ENCODE measurements at regions of chr19 and their contacts with region 1.

Region 1: DNA sequence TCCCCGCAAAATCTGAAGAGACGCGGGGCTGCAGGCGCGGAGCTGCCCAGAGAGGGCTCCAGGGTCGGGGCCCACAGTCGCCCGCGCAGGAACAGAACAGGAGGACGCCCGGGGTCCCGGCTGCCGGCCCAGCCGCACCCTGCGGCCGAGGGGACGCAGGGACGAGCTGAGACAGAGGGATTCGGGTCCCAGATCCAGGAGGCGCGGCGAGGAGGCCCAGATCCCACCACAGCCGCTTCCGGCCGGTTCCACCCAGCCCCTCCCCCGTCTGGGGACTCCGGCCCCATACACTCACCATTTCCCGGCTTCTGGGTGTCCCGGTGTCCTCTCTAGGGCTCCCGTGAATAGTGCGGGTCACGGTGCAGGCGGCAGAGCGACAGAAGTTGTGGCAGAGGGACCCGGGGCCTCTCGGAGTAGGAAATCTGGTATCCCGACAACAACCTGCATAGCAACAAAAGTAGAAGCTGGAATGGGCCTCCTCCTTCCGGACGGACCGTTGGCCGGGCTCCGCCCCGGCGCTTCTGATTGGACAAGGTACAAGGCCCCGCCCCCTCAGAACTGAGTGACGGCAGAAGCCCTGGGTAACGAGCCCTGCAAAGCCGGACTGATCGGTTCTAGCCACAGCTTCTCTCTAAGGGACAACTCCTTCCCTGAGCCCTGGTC is at the start of gene ZNF20:
- DNase-seq: peak; percentile 96 to 98 (median 97)
- ATAC-seq: peak; percentile 99 to 100 (median 100)
- H3K4me3 ChIP-seq: peak within 1 kb of the TSS; percentile 60 to 98 (median 86)
- H3K27ac ChIP-seq: peak within 1 kb of the TSS; percentile 12 to 91 (median 81)
- H3K4me1 ChIP-seq: peaks cover 3 to 25% (median 19%) of the 10 kb centered on the region in 12 donors
- H3K27me3 ChIP-seq: no peaks in the 10 kb centered on the region
- CTCF ChIP-seq: peak in 1 of 12 donors; percentile 17
- POLR2A ChIP-seq: peak in 1 of 2 donors; percentile 43
- total RNA-seq, gene ZNF20: 0.63 to 2.7 (median 1.4) TPM in 6 of 9 donors, not detected in the others

Region 2: GRCh38 chr19:11881151-11881800 is 258.7 kb before region 1 on chr19:
- intact Hi-C with region 1: loop called (anchors 1 to 10 kb)
- DNase-seq: peak in 4 of 5 donors; percentile 37 to 48 (median 43)
- ATAC-seq: peak in 3 of 4 donors; percentile 76 to 83 (median 79)
- H3K4me3 ChIP-seq: peak overlapping the region in 2 of 12 donors; percentile 8 to 17
- H3K27ac ChIP-seq: no peak overlapping the region
- H3K4me1 ChIP-seq: peaks cover 0 to 4% (median 0%) of the 10 kb centered on the region in 12 donors
- H3K27me3 ChIP-seq: no peaks in the 10 kb centered on the region
- CTCF ChIP-seq: peak; percentile 51 to 81 (median 72)
- POLR2A ChIP-seq: no peak

Region 3: DNA sequence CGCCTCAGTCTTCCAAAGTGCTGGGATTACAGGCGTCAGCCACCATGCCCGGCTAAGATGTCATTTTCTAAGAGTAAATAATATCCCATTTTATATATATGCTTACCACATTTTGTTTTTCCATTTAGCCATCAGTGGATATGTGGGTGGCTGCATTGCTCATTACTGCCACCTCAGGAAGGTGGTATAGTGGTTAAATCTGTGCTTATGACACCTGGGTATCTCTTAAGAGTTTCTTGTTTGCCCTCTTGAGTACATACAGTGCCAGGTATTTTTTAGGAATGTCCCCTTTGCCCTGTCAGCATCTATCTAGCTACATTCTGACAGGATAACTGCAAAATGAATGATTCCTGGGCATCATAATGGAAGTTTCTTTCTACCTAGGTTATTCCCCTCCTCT is 237.8 kb before region 1 on chr19:
- intact Hi-C with region 1: no loop called
- DNase-seq: no peak
- ATAC-seq: no peak
- H3K4me3 ChIP-seq: no peak overlapping the region
- H3K27ac ChIP-seq: no peak overlapping the region
- H3K4me1 ChIP-seq: no peaks in the 10 kb centered on the region
- H3K27me3 ChIP-seq: no peaks in the 10 kb centered on the region
- CTCF ChIP-seq: no peak
- POLR2A ChIP-seq: no peak

Region 4: GRCh38 chr19:11924886-11925650 is 214.9 kb before region 1 on chr19 and contains the start of gene ZNF700:
- intact Hi-C with region 1: loop called in 4 of 10 experiments (anchors 1 to 10 kb)
- DNase-seq: peak; percentile 94 to 96 (median 95)
- ATAC-seq: peak; percentile 98 to 99 (median 99)
- H3K4me3 ChIP-seq: peak within 1 kb of the TSS; percentile 57 to 100 (median 92)
- H3K27ac ChIP-seq: peak within 1 kb of the TSS; percentile 79 to 99 (median 92)
- H3K4me1 ChIP-seq: peaks cover 0 to 35% (median 12%) of the 10 kb centered on the region in 12 donors
- H3K27me3 ChIP-seq: no peaks in the 10 kb centered on the region
- CTCF ChIP-seq: no peak
- POLR2A ChIP-seq: peak in 1 of 2 donors; percentile 77
- total RNA-seq, gene ZNF700: 2.2 to 7.5 (median 4.1) TPM

Region 5: DNA sequence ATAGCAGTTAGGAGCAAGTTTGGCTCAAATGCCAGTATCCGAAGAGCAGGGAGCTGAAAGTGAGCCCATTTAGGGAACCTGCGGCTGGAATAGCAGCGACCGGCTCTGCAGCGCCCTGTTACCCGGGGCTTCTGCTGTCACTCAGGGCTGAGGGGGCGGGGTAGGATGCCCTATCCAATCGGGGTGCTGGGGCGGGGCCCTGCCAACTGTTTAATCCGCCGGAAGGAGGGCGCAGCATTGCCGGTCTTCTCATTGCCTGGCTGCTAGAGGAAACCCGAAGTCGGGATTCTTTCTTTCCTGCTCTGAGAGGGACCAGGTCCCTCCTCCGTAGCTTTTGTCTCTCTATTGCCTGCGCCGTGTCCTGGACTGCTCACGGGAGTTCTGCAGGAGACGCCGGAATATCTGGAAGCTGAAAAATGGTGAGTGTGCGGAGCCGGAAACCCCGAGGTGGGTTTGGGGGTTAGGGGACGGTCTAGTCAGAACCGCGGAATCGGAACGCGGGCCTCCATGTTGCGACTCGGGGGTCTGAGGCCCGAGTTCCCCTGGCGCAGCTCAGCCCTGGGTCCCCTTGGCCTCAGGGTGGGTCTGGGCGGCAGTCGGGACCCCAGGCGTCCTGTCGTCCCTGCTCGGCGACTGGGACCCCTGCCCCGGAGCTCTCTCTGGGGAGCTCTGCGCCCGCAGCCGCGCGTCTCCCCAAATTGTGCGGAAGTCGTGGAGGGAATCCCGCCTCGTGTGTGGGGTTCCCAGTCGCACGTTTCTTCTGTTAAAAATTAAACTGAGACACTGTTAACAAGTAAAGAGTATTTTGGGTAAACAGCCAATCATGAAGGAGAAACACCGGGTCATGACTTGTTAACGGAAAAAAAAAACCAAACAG is 152.4 kb before region 1 on chr19:
- intact Hi-C with region 1: loop called in 1 of 10 experiments (anchors 10 kb)
- DNase-seq: peak; percentile 95 to 99 (median 97)
- ATAC-seq: peak; percentile 100
- H3K4me3 ChIP-seq: peak overlapping the region; percentile 59 to 96 (median 87)
- H3K27ac ChIP-seq: peak overlapping the region; percentile 55 to 95 (median 88)
- H3K4me1 ChIP-seq: peaks cover 0 to 11% (median 0%) of the 10 kb centered on the region in 12 donors
- H3K27me3 ChIP-seq: no peaks in the 10 kb centered on the region
- CTCF ChIP-seq: peak in 2 of 12 donors; percentile 2 to 8
- POLR2A ChIP-seq: peak in 1 of 2 donors; percentile 79

Region 6: DNA sequence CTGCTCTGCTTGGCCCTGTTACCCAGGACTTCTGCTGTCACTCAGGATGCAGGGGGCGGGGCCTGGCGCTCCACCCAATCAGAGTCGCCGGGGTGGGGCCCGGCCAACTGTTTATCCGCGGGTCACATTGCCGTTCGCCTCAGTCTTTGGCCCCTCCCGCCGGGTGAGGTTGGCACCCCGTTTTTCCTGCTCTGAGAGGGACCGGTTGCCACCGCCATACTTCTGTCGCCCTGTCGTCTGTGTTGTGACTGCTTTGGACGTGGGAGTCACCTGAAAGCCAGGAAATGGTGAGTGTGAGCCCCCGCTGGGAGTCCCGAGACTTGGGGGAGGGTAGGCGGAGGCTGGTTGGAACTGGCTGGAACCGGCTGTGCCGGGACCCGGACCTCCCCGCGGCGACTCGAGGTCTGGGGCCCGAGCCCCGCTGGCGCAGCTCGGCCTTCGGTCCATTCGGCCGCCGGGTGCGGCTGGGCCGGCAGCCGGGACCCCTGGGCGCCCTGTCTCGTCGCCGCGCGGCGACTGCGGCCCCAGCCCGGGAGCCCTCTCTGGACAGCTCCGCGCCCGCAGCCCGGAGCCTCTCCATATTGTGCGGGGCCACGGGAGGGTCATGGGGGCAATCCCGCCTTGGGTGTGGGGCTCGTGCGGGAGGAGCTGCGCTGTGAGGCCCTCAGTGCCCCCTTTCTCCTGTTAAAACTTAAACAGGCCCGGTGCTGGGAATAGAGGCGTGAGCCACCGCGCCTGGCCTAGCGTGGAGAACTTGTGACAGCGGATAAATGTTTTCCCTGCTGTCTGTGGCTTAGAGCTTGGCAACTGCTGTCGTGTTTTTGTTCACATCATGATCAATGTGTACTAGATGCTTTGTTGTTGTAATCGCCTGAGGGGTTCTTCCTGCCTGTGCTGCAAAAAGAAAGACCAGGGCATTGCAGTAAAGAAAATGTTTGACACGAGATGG is 75.2 kb before region 1 on chr19 and contains the start of gene ZNF844:
- intact Hi-C with region 1: loop called in 1 of 10 experiments (anchors 1 kb)
- DNase-seq: peak; percentile 97 to 99 (median 98)
- ATAC-seq: peak; percentile 99 to 100 (median 99)
- H3K4me3 ChIP-seq: peak within 1 kb of the TSS; percentile 69 to 96 (median 81)
- H3K27ac ChIP-seq: peak within 1 kb of the TSS; percentile 88 to 99 (median 96)
- H3K4me1 ChIP-seq: peaks cover 0 to 27% (median 14%) of the 10 kb centered on the region in 12 donors
- H3K27me3 ChIP-seq: no peaks in the 10 kb centered on the region
- CTCF ChIP-seq: peak in 1 of 12 donors; percentile 10
- POLR2A ChIP-seq: peak; percentile 52 to 98
- total RNA-seq, gene ZNF844: 7.5 to 24.3 (median 13.8) TPM

Region 7: GRCh38 chr19:12092065-12092867 is 47.8 kb before region 1 on chr19:
- intact Hi-C with region 1: loop called (anchors 1 to 10 kb)
- DNase-seq: peak; percentile 89 to 94 (median 92)
- ATAC-seq: peak; percentile 94 to 100 (median 99)
- H3K4me3 ChIP-seq: peak overlapping the region; percentile 48 to 88 (median 74)
- H3K27ac ChIP-seq: peak overlapping the region in 11 of 12 donors; percentile 15 to 85 (median 80)
- H3K4me1 ChIP-seq: peaks cover 0 to 23% (median 1%) of the 10 kb centered on the region in 12 donors
- H3K27me3 ChIP-seq: no peaks in the 10 kb centered on the region
- CTCF ChIP-seq: no peak
- POLR2A ChIP-seq: peak in 1 of 2 donors; percentile 63

Region 8: DNA sequence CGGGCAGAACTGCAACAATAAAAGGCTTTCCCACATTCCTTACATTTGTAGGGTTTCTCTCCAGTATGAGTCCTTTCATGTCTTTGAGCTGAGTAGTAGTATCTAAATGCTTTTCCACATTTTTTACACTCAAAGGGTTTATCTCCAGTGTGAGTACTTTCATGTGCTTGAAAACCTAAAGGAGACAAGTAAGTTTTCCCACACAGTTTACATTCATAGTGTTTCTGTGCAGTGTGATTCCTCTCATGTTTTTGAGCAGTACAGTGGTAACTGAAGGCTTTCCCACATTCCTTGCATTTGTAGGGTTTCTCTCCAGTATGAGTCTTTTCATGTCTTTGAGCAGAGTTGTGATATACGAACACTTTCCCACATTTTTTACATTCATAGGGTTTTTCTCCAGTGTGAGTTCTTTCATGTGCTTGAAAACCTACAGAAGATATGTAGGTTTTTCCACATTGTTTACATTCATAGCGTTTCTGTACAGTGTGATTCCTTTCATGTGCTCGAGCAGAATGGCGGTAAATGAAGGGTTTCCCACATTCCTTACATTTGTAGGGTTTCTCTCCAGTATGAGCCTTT is 107.7 kb after region 1 on chr19:
- intact Hi-C with region 1: no loop called
- DNase-seq: no peak
- ATAC-seq: no peak
- H3K4me3 ChIP-seq: no peak overlapping the region
- H3K27ac ChIP-seq: no peak overlapping the region
- H3K4me1 ChIP-seq: peaks cover 0 to 2% (median 0%) of the 10 kb centered on the region in 12 donors
- H3K27me3 ChIP-seq: no peaks in the 10 kb centered on the region
- CTCF ChIP-seq: no peak
- POLR2A ChIP-seq: no peak